Breast epithelium (tissue), 4 donors: ENCODE measurements at regions of chr7 and their contacts with region 1.

Region 1: DNA sequence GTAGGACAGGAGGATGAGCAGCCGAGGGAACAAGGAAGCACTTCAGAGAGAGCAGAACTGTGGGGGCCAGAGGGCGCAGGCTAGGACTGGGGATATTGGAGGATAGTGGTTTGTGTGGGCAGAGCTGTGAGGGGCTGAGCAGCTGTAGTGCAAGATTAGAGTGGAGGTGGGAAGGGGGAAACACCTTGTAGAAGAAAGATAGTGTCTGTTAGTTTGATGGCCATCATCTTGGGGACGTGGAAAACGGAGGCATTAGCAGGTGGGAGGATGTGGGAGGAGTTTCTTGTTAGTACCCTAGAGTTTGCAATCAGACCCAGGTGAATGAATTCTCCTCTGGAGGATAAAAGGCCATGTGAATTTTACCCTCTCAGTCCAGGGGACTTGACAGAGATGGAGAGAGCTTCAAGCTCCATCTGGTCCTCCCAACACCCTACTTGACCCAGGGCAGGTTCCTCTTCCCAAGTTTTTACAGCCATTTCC is 34.0 kb downstream of the PRSS2 start:
- DNase-seq: no peak
- H3K4me3 ChIP-seq: no peak overlapping the region
- H3K27ac ChIP-seq: peak overlapping the region in 1 of 2 donors; percentile 19
- H3K4me1 ChIP-seq: no peaks in the 10 kb centered on the region
- H3K27me3 ChIP-seq: peaks cover 0 to 4% of the 10 kb centered on the region in 2 donors
- CTCF ChIP-seq: no peak
- POLR2A ChIP-seq: no peak

Region 2: DNA sequence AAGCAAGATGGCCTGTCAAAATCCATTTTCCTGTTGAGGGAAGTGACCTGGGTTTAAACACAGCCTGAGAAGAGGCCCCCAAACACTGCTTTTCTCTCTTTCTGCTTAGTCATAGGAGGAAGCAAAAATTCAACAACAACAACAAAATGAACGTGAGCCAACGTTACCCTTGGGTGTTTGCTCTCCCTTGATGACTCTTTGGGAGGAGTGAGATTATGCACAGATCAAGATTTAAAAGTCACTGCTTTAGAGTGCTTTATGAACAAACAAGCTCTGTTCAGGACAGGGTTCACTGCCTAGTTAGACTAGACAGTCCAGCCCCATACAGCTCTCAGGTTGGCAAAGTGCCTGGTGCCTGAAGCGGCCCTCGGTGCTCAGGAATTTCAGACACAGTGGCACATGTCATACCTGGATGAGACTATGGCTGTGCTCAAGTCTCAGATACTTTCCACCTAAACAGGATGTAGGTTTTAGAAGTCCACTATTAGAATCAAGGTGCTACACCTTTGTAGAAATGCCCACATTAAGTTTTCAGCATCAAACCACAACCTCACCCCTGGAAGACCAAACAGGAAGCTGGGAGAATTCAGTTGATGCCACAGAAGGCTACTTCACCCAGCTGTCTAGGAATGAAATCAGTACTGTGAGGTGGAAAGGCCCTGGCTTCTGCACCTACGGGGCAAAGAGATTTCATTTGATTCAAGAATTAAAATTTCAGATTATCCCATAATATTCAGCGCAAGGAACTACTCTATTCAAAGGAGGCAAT is 1141.5 kb before region 1 on chr7:
- intact Hi-C with region 1: no loop called
- DNase-seq: peak; percentile 80 to 89
- H3K4me3 ChIP-seq: no peak overlapping the region
- H3K27ac ChIP-seq: peak overlapping the region; percentile 54 to 78
- H3K4me1 ChIP-seq: no peaks in the 10 kb centered on the region
- H3K27me3 ChIP-seq: no peaks in the 10 kb centered on the region
- CTCF ChIP-seq: no peak
- POLR2A ChIP-seq: no peak

Region 3: GRCh38 chr7:142535123-142535779 is 269.5 kb before region 1 on chr7:
- intact Hi-C with region 1: loop called (anchors 5 kb)
- DNase-seq: no peak
- H3K4me3 ChIP-seq: no peak overlapping the region
- H3K27ac ChIP-seq: no peak overlapping the region
- H3K4me1 ChIP-seq: no peaks in the 10 kb centered on the region
- H3K27me3 ChIP-seq: no peaks in the 10 kb centered on the region
- CTCF ChIP-seq: peak in 2 of 3 donors; percentile 19 to 32
- POLR2A ChIP-seq: no peak

Region 4: GRCh38 chr7:142842251-142842766 is 37.5 kb after region 1 on chr7:
- intact Hi-C with region 1: no loop called
- DNase-seq: no peak
- H3K4me3 ChIP-seq: no peak overlapping the region
- H3K27ac ChIP-seq: no peak overlapping the region
- H3K4me1 ChIP-seq: no peaks in the 10 kb centered on the region
- H3K27me3 ChIP-seq: no peaks in the 10 kb centered on the region
- CTCF ChIP-seq: no peak
- POLR2A ChIP-seq: no peak